Psoas muscle (tissue), 8 donors: ENCODE measurements at regions of chr6 and their contacts with region 1.

Region 1: GRCh38 chr6:53059648-53060589 is 5.3 kb upstream of the FBXO9 start:
- DNase-seq: no peak
- ATAC-seq: no peak
- H3K4me3 ChIP-seq: peak overlapping the region; percentile 93
- H3K27ac ChIP-seq: peak overlapping the region; percentile 93
- H3K4me1 ChIP-seq: peaks cover 48% of the 10 kb centered on the region
- H3K27me3 ChIP-seq: no peaks in the 10 kb centered on the region
- CTCF ChIP-seq: no peak

Region 2: GRCh38 chr6:52881996-52882841 is 177.7 kb before region 1 on chr6:
- intact Hi-C with region 1: loop called in 1 of 2 experiments (anchors 5 kb)
- DNase-seq: peak; percentile 28 to 57
- ATAC-seq: peak; percentile 91 to 98 (median 96)
- H3K4me3 ChIP-seq: peak overlapping the region; percentile 71
- H3K27ac ChIP-seq: peak overlapping the region; percentile 36
- H3K4me1 ChIP-seq: no peaks in the 10 kb centered on the region
- H3K27me3 ChIP-seq: no peaks in the 10 kb centered on the region
- CTCF ChIP-seq: peak; percentile 73

Region 3: GRCh38 chr6:53074347-53074746 is 14.4 kb after region 1 on chr6:
- intact Hi-C with region 1: loop called in 1 of 2 experiments (anchors 1 kb)
- DNase-seq: no peak
- ATAC-seq: no peak
- H3K4me3 ChIP-seq: no peak overlapping the region
- H3K27ac ChIP-seq: no peak overlapping the region
- H3K4me1 ChIP-seq: no peaks in the 10 kb centered on the region
- H3K27me3 ChIP-seq: no peaks in the 10 kb centered on the region
- CTCF ChIP-seq: no peak